ENCODE measurements at regions of chr3 and their contacts with region 1.

Region 1: DNA sequence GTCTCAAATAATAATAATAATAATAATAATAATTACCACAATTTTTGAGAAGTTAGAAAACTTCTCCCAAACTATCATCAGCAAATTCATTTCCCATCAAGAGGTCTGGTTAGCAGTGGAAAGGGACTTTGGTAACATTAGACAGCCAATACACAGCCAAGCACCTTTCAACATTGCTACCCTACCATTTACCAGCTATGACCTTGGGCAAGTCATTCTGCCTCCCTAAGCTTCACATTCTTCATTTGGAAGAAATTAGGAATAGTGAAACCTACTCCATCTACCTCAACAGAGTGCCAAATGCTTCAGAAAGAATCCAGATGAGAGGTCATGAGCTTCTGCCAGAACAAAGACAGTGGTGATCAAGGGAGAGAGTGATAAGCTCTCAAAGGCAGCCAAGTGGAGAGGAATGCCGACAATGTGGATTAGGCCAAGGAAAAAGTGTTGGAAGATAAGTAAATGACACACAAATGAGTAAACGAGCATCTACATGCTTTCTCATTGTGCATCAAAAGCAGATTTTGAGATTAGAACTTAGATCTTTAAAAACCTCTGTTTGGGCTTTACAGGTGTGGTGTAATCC is 42.9 kb upstream of the LPP start:
- DNase-seq: no peak
- ATAC-seq: peak; percentile 92

Region 2: DNA sequence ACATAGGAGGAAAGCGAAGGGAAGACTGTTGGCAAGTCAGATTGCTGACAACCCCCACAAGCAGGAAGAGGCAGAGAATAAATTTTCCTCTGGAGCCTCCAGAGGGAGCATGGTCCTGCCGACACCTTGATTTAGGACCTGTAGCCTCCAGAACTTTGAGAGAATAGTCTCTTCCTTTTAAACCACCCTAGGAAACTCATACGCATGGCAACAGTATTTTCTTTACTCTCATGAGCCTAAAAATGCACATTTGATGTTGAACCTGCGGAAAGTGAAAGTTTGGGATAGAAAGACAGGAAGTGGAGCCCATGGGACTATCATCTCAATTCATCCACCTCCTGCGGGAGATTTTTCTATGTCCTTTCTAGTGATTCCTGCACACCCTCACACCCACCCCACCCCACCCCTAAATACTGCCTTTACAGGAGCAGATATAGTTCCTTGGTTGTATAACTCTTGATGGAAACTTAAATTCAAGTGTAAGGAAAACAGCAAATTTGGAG is 73.8 kb before region 1 on chr3:
- intact Hi-C with region 1: loop called (anchors 2 kb)
- DNase-seq: no peak
- ATAC-seq: peak; percentile 81

Region 3: DNA sequence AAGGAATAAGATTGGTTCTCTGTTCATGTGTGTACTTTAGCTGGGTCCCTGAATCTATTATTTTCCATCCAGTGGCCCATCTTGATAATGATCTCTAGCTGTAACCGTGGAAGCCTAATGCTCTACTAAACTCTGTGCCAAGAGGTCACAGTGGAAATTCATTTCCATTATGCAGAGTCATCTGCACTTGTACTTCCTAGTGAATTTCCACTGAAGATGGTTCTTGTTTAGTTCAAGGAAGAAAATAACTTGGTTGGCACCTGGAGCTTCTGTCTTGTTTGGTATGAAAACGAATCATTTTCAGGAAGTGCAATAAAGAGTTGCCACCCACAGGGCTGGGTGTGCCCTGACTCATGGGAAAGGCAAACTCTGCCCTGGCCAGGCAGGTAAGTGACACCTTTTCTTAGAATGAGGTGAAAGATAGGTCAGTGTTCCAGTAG is 53.2 kb after region 1 on chr3:
- intact Hi-C with region 1: loop called (anchors 5 kb)
- DNase-seq: no peak
- ATAC-seq: no peak

Region 4: DNA sequence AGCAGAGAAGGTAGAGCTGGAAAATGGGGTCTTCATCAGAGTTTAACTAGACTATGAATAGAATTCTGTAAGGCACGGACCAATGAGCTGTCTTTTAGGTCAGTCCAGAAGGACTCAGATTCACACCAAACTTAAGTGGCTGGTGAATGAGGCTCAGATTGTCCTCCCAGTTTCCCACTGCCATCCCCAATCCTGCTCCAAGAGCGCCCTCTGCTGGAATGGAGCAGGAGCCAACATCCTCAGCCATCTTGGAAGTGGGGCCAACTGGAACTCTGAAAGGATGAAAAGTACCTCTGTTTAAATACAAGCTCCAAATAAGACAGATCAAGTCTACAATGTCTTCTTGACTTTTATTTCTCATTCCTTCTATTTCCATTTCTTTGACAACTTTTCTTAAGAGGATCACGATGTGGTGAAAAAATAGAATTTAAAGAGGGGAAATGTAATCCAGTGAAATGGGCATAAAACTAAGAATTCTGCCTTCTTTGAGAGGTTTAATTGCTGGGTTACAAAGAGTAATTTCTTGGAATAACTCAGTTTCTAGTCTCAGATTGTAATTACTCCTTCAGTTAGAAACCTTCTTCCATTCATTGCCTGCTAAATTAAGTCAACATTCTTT is 843.6 kb after region 1 on chr3:
- intact Hi-C with region 1: loop called (anchors 5 kb)
- DNase-seq: peak; percentile 82
- ATAC-seq: peak; percentile 82

Measured in Right ventricle myocardium inferior (tissue), 1 donor.